Right lobe of liver (tissue), 6 donors: ENCODE measurements at regions of chr1 and their contacts with region 1.

Region 1: GRCh38 chr1:85237613-85238012 is 21.8 kb downstream of the C1orf52 start:
- DNase-seq: no peak
- ATAC-seq: no peak
- H3K4me3 ChIP-seq: no peak overlapping the region
- H3K27ac ChIP-seq: no peak overlapping the region
- H3K4me1 ChIP-seq: no peaks in the 10 kb centered on the region
- H3K27me3 ChIP-seq: no peaks in the 10 kb centered on the region
- CTCF ChIP-seq: no peak
- POLR2A ChIP-seq: no peak

Region 2: DNA sequence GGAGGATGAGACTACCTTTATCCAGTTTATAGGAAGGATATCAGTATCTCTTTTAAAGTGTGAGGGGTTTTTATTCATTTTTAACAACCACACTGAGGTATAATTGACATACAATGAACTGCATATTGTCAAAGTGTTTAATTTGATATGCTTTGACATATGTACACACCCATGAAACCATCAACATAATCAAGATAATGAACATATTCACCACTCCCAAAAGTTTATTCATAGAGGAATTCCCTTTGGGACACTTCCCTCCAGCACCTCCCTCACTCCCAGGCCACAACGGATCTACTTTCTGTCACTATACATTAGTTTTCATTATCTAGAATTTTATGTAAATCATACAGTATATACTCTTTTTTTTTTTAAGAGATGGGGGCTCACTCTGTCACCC is 125.9 kb before region 1 on chr1:
- intact Hi-C with region 1: loop called (anchors 5 to 10 kb)
- DNase-seq: no peak
- ATAC-seq: no peak
- H3K4me3 ChIP-seq: no peak overlapping the region
- H3K27ac ChIP-seq: no peak overlapping the region
- H3K4me1 ChIP-seq: no peaks in the 10 kb centered on the region
- H3K27me3 ChIP-seq: no peaks in the 10 kb centered on the region
- CTCF ChIP-seq: no peak
- POLR2A ChIP-seq: no peak

Region 3: GRCh38 chr1:85158910-85159309 is 78.7 kb before region 1 on chr1:
- intact Hi-C with region 1: no loop called
- DNase-seq: no peak
- ATAC-seq: no peak
- H3K4me3 ChIP-seq: no peak overlapping the region
- H3K27ac ChIP-seq: no peak overlapping the region
- H3K4me1 ChIP-seq: no peaks in the 10 kb centered on the region
- H3K27me3 ChIP-seq: no peaks in the 10 kb centered on the region
- CTCF ChIP-seq: no peak
- POLR2A ChIP-seq: no peak